Heart left ventricle (tissue), 16 donors: ENCODE measurements at regions of chr1 and their contacts with region 1.

Region 1: DNA sequence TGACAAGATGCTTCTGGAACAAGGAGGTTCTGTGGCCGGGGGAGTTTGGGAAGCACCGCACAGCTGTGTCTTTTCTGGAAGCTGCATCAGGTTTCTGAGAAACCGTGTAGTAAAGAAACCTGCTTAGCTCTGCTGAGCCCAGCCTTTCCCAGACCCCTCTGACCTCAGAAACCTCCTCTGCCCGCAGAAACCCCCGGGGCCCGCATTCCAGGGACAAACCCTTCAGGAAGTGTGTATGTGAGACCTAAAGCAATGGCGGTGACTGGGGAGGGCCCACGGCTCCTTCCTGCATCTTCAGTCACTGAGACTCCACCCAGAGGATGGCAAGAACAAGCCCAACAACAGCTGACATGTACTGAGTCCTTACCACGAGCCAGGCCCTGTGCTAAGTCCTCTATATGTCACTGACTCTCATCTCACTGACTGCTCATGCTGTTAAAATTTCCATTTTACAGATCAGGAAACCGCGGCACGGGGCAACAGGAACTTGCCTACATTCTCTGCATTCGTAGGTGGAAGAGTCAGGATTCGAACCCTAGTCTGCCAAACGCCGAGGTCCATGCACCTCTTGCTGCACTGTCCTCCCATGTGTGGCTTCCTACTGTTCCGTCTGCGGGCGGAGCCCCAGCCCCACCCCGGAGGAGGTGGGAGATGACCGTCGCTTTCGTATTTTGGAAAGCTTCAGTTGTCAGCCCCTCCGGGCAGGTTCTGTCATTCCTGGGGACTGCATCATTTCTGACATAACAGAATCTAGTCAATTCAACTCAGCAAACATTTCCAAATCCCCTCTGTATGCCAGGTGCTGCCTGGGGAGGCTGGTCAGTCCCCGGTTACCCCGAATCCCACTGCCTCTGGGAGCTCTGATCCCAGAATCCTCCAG is 73.3 kb upstream of the KLHDC7A start:
- DNase-seq: no peak
- ATAC-seq: no peak
- H3K4me3 ChIP-seq: no peak overlapping the region
- H3K27ac ChIP-seq: no peak overlapping the region
- H3K4me1 ChIP-seq: no peaks in the 10 kb centered on the region
- H3K27me3 ChIP-seq: peaks cover 0 to 57% (median 10%) of the 10 kb centered on the region in 9 donors
- CTCF ChIP-seq: no peak
- POLR2A ChIP-seq: no peak

Region 2: DNA sequence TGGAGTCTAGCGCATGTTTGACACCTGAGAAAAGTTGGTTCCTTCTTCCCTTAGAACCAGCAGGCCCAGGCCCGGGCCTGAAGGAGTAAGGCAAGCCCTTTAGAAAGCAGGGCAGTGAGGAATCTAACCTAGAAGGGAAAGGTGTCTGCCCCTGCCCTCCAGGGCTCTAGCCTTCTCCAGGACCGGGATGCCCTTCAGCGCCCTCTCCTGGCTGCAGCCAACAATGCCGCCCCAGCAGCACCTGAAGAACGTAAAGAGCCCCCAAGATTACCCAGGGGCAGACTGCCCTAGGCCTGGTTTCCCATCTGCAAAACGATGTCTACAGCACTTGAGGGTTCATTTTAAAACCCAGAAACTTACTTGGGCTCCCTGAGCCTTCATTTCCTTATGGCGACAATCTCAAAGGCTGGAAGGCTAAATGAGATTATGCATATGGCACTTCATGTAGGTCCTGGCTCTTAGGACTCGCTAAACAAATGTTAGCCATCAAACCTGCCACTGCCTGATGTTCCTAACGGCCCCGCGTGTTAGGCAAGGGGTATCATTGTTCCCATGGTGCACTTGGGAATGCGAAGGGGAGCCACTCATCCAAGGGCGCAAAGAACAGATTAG is 33.4 kb before region 1 on chr1:
- intact Hi-C with region 1: loop called in 1 of 10 experiments (anchors 1 kb)
- DNase-seq: no peak
- ATAC-seq: no peak
- H3K4me3 ChIP-seq: no peak overlapping the region
- H3K27ac ChIP-seq: no peak overlapping the region
- H3K4me1 ChIP-seq: no peaks in the 10 kb centered on the region
- H3K27me3 ChIP-seq: peaks cover 0 to 39% (median 0%) of the 10 kb centered on the region in 9 donors
- CTCF ChIP-seq: peak in 3 of 12 donors; percentile 17 to 29 (median 20)
- POLR2A ChIP-seq: no peak